Activated CD4-positive, alpha-beta T cell treated with anti-CD3 and anti-CD28 coated beads for 36 hours (primary cell): ENCODE measurements at regions of chr18 and their contacts with region 1.

Region 1: GRCh38 chr18:45212181-45213039 is 402.9 kb upstream of the SLC14A2 start:
- DNase-seq: peak; percentile 89
- ATAC-seq: peak; percentile 94
- H3K4me3 Mint-ChIP-seq: no peak overlapping the region
- H3K27ac Mint-ChIP-seq: no peak overlapping the region
- H3K4me1 Mint-ChIP-seq: no peaks in the 10 kb centered on the region
- H3K27me3 Mint-ChIP-seq: peaks cover 8% of the 10 kb centered on the region

Region 2: GRCh38 chr18:43620936-43621335 is 1591.5 kb before region 1 on chr18:
- CTCF ChIA-PET with region 1: no interaction called
- POLR2A ChIA-PET with region 1: no interaction called
- intact Hi-C with region 1: loop called (anchors 1 to 5 kb)
- DNase-seq: no peak
- ATAC-seq: no peak
- H3K4me3 Mint-ChIP-seq: no peak overlapping the region
- H3K27ac Mint-ChIP-seq: no peak overlapping the region
- H3K4me1 Mint-ChIP-seq: no peaks in the 10 kb centered on the region
- H3K27me3 Mint-ChIP-seq: peaks cover 2% of the 10 kb centered on the region

Region 3: GRCh38 chr18:44098551-44099098 is 1113.8 kb before region 1 on chr18:
- CTCF ChIA-PET with region 1: no interaction called
- POLR2A ChIA-PET with region 1: no interaction called
- intact Hi-C with region 1: loop called in 1 of 2 experiments (anchors 10 kb)
- DNase-seq: no peak
- ATAC-seq: no peak
- H3K4me3 Mint-ChIP-seq: no peak overlapping the region
- H3K27ac Mint-ChIP-seq: no peak overlapping the region
- H3K4me1 Mint-ChIP-seq: no peaks in the 10 kb centered on the region
- H3K27me3 Mint-ChIP-seq: no peaks in the 10 kb centered on the region

Region 4: GRCh38 chr18:44130376-44130942 is 1082.0 kb before region 1 on chr18:
- CTCF ChIA-PET with region 1: no interaction called
- POLR2A ChIA-PET with region 1: no interaction called
- intact Hi-C with region 1: loop called (anchors 1 to 2 kb)
- DNase-seq: peak; percentile 14
- ATAC-seq: no peak
- H3K4me3 Mint-ChIP-seq: no peak overlapping the region
- H3K27ac Mint-ChIP-seq: no peak overlapping the region
- H3K4me1 Mint-ChIP-seq: no peaks in the 10 kb centered on the region
- H3K27me3 Mint-ChIP-seq: peaks cover 2% of the 10 kb centered on the region

Region 5: GRCh38 chr18:44579028-44579702 is 633.2 kb before region 1 on chr18:
- CTCF ChIA-PET with region 1: interaction called, 5 read pairs
- POLR2A ChIA-PET with region 1: no interaction called
- intact Hi-C with region 1: loop called (anchors 1 to 5 kb)
- DNase-seq: no peak
- ATAC-seq: no peak
- H3K4me3 Mint-ChIP-seq: no peak overlapping the region
- H3K27ac Mint-ChIP-seq: no peak overlapping the region
- H3K4me1 Mint-ChIP-seq: peaks cover 3% of the 10 kb centered on the region
- H3K27me3 Mint-ChIP-seq: peaks cover 5% of the 10 kb centered on the region

Region 6: DNA sequence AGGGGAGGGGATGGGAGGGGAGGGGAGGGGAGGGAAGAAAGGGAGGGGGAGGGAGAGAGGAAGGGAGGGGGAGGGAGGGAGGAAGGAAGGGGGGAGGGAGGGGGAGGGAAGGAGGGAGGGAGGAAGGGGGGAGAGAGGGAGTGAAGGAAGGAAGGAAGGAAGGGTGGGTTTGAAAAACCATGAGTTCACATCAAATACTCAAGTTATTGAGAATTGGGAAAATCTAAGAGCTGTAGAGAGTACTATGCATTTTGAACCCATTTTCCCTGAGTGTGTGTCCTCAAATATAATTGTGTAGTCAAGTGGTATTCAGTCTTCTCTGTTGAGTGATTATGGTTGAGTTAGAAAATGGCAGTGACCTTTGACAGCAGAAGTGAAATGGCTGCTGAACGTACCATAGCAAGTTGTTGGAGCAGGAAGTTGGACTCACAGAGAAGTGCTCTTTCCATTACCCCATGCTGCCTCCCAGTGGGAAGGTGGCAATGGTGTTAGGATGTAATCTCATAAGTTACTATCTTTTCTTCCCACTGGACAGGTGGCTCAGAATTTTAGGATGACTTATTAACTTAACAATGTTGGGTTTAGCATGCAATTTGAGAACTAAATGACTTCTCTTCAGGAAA is 317.1 kb before region 1 on chr18:
- CTCF ChIA-PET with region 1: interaction called, 5 read pairs
- POLR2A ChIA-PET with region 1: no interaction called
- intact Hi-C with region 1: loop called in 1 of 2 experiments (anchors 5 kb)
- DNase-seq: peak; percentile 62
- ATAC-seq: peak; percentile 45
- H3K4me3 Mint-ChIP-seq: no peak overlapping the region
- H3K27ac Mint-ChIP-seq: peak overlapping the region; percentile 27
- H3K4me1 Mint-ChIP-seq: peaks cover 51% of the 10 kb centered on the region
- H3K27me3 Mint-ChIP-seq: peaks cover 2% of the 10 kb centered on the region

Region 7: GRCh38 chr18:45106331-45106774 is 106.1 kb before region 1 on chr18:
- CTCF ChIA-PET with region 1: interaction called, 4 read pairs
- POLR2A ChIA-PET with region 1: no interaction called
- intact Hi-C with region 1: loop called in 1 of 2 experiments (anchors 10 kb)
- DNase-seq: no peak
- ATAC-seq: no peak
- H3K4me3 Mint-ChIP-seq: no peak overlapping the region
- H3K27ac Mint-ChIP-seq: no peak overlapping the region
- H3K4me1 Mint-ChIP-seq: no peaks in the 10 kb centered on the region
- H3K27me3 Mint-ChIP-seq: peaks cover 3% of the 10 kb centered on the region

Region 8: GRCh38 chr18:45488645-45489044 is 276.2 kb after region 1 on chr18:
- CTCF ChIA-PET with region 1: no interaction called
- POLR2A ChIA-PET with region 1: no interaction called
- intact Hi-C with region 1: no loop called
- DNase-seq: no peak
- ATAC-seq: no peak
- H3K4me3 Mint-ChIP-seq: no peak overlapping the region
- H3K27ac Mint-ChIP-seq: no peak overlapping the region
- H3K4me1 Mint-ChIP-seq: no peaks in the 10 kb centered on the region
- H3K27me3 Mint-ChIP-seq: peaks cover 5% of the 10 kb centered on the region

Region 9: DNA sequence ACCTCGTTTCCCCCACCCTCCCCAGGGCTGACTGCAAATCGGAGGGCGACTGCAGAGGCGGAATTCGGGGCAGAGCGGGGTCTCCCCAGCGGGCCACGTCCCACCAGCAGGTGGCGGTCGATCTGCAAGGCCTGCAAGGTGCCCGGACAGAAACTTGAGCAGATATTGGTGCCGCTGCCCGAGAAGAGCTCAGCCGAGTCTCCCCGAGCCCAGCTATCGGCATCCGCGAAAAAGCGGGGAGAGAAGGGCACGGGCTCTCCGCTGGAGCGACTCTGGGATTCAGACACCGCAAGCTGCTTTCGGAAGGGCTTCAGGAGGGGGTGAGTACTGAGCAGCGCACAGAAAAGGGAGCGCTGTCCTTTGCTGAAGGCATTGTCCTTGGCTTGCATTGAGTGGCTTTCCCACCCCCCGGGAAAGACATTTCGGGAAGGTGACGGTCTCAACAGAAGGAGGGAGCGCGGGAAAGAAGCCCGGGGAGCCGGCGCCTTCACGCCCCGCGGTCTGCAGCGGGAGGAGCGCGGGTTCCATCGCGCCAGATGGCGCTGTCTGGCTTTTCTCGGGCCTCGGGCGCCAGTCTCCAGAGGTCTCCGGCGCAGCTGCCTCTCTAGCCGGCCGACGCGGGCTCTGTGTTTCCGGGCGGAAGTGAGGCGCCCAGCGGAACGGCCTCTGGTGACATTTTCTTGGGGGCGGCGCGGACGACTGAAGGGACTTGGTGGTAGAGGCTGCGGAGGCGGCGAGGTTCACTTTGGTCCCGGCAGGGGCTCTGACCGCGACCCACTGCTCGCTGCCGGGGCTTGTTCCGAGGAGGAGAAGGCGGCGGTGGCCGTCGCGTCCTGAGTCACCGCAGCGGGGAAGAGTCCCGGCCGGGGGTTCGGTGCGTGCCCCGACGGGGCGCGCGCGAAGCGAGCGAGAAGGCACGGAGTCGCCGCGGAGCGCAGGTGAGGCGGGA is 961.3 kb after region 1 on chr18:
- CTCF ChIA-PET with region 1: no interaction called
- POLR2A ChIA-PET with region 1: no interaction called
- intact Hi-C with region 1: no loop called
- DNase-seq: peak; percentile 96
- ATAC-seq: peak; percentile 90
- H3K4me3 Mint-ChIP-seq: peak overlapping the region; percentile 97
- H3K27ac Mint-ChIP-seq: peak overlapping the region; percentile 99
- H3K4me1 Mint-ChIP-seq: peaks cover 37% of the 10 kb centered on the region
- H3K27me3 Mint-ChIP-seq: no peaks in the 10 kb centered on the region